ENCODE measurements at regions of chr3 and their contacts with region 1.

Region 1: DNA sequence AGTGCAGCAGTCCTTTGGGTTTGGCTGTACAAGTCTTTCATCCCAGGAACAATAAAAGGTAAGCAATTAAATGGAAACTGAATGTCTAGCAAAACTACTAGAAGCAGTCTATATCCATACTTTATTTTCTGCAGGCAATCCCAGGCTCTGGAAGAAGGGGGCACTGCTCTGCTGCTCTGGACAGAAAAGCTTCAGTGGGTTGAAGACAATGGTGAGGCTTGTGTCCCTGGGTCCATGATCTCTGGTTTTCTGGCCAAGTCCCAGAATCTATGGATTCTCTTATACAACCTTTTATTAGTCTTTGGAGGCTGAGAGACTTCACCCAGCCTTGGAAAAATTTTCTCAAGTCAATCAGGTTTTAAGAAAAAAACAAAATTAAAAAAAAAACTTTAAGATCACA is 35.6 kb downstream of the SCAP start:
- DNase-seq: peak; percentile 79
- ATAC-seq: peak; percentile 71
- H3K4me3 ChIP-seq: no peak overlapping the region
- H3K27ac ChIP-seq: peak overlapping the region; percentile 60
- H3K4me1 ChIP-seq: peaks cover 63% of the 10 kb centered on the region
- H3K27me3 ChIP-seq: no peaks in the 10 kb centered on the region
- CTCF ChIP-seq: peak; percentile 76
- EP300 ChIP-seq: no peak
- POLR2A ChIP-seq: no peak
- RAD21 ChIP-seq: peak; percentile 85; the same call in 1 of the 2 replicates

Region 2: GRCh38 chr3:47455806-47456452 is 15.8 kb after region 1 on chr3:
- CTCF ChIA-PET with region 1: no interaction called
- POLR2A ChIA-PET with region 1: interaction called, 12 read pairs
- in situ Hi-C with region 1: no loop called
- intact Hi-C with region 1: no loop called
- DNase-seq: no peak
- ATAC-seq: no peak
- H3K4me3 ChIP-seq: no peak overlapping the region
- H3K27ac ChIP-seq: no peak overlapping the region
- H3K4me1 ChIP-seq: peaks cover 48% of the 10 kb centered on the region
- H3K27me3 ChIP-seq: no peaks in the 10 kb centered on the region
- CTCF ChIP-seq: no peak
- EP300 ChIP-seq: no peak
- POLR2A ChIP-seq: no peak
- RAD21 ChIP-seq: no peak

Region 3: DNA sequence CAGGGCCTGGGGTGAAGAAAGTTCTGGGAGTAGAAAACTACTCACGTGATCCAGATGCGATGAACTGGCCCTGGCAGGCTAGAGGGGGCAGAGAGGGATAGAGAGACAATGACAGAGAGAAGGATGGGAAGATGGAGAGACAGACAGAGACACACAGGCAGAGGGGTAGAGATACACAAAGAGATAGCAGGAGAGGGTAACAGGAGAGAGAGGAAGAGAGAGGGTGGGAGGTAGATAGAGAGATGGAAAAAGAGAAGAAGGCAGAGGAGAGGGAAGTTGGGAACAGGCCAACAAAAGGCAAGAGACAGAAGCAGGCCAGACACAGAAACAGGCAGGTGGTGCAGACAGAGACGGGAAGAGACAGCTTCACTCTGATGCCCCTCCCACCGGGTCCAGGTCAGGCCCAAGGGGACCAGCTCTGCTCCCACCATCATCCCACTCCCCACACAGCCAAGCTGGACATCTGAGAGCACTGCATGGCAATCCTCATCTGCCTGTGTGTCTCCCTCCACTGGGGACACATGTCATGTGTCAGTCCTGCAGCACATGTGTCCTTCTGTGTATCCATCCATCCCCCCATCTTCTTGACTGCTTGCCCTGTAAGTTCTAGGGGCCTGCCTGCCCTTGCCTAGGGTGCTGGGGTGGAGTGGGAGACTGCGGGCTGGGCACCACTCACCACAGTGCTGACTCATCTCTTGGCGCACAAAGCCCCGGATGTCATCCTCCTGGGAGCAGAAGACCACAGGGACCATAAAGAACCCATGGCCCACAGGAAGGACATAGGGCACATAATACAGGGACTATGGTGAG is 1125.7 kb after region 1 on chr3:
- CTCF ChIA-PET with region 1: no interaction called
- POLR2A ChIA-PET with region 1: no interaction called
- in situ Hi-C with region 1: no loop called
- intact Hi-C with region 1: no loop called
- DNase-seq: no peak
- ATAC-seq: no peak
- H3K4me3 ChIP-seq: no peak overlapping the region
- H3K27ac ChIP-seq: no peak overlapping the region
- H3K4me1 ChIP-seq: peaks cover 91% of the 10 kb centered on the region
- H3K27me3 ChIP-seq: no peaks in the 10 kb centered on the region
- CTCF ChIP-seq: no peak
- EP300 ChIP-seq: no peak
- POLR2A ChIP-seq: no peak
- RAD21 ChIP-seq: no peak